GM12878 (cell line): ENCODE measurements at regions of chr6 and their contacts with region 1.

Region 1: DNA sequence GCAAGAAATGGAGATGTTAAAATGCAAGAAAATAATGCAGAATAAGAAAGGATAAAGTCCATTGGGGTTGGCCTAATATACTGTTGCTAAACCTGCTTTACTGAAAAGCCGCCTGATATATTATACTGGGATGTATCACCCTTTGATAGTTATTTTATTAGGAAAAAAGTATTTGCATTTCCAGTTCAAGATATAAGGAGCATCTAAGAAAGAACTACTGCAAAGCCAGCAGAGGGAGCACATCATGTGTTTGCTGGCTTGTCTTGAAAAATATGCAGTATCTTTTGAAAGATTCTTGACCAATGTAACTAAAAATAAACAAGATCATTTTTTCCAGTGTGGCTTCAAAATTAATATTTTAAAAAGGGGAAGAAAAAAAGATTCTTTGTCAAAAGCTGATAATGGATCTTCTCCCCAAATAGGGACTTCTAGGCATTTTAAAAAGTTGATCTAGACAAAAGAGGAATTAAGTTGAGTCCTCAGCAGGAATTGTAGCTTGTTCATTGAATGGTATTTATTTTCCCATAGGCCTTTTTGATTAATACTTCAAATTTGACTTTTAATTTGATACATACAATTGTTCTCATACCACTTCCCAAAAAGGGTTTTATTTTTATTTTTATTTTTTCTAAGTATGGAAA is 214.9 kb downstream of the ZFAND3 start:
- DNase-seq: no peak
- ATAC-seq: peak; percentile 49; the same call in 2 of the 3 replicates
- H3K4me3 ChIP-seq: no peak overlapping the region
- H3K27ac ChIP-seq: no peak overlapping the region
- H3K4me1 ChIP-seq: peaks cover 12% of the 10 kb centered on the region; the same call in 1 of the 2 replicates
- H3K27me3 ChIP-seq: no peaks in the 10 kb centered on the region
- CTCF ChIP-seq: peak; percentile 26 to 49 (median 43); a peak in 4 of 6 replicates
- EP300 ChIP-seq: no peak
- POLR2A ChIP-seq: no peak
- RAD21 ChIP-seq: peak; percentile 54

Region 2: DNA sequence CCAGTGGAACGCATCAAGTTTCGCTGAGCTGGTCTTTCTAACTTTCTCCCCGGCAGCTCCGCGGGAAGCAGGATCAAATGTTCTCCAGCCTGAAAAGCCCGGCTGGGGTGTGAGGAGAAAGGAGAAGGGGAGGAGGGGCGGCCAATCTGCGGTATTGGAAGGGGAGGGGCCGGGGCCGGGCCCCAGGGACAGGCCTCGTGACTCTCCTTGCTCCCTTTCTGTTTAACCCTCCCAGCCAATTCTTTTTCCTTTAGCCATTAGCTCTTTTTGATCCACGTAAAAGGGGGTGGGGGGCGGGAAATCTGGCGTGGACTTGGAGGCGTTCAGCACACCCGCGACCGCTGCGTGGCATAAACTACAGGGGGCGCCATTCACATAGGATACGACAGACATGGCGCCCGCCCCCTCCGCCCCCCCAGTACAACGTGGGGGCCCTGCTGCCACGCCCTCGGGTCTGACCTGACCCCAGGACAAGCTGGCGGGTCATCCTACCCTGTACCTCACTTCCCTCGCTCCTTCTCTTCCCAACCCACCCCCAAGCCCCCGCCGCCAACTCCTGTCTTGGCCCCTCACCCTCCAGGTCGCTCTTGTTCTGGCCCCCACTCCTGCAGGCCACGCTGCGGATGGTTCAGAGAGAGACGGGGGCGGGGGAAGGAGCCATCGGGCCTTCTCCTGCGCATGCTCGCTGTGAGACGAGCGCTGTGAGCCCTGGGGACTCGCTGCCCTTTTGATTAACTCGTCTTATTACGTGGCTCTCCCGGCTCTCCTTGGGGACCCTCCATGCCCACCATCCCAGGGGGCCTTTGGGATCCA is 328.9 kb before region 1 on chr6:
- CTCF ChIA-PET with region 1: interaction called, 24 read pairs
- POLR2A ChIA-PET with region 1: no interaction called
- RAD21 ChIA-PET with region 1: interaction called, 4 read pairs
- SMC1A ChIA-PET with region 1: interaction called, 8 read pairs
- in situ Hi-C with region 1: no loop called
- intact Hi-C with region 1: no loop called
- DNase-seq: peak; percentile 30
- ATAC-seq: peak; percentile 94
- H3K4me3 ChIP-seq: peak overlapping the region; percentile 38
- H3K27ac ChIP-seq: no peak overlapping the region; the same call in 1 of the 2 replicates
- H3K4me1 ChIP-seq: peaks cover 5% of the 10 kb centered on the region
- H3K27me3 ChIP-seq: peaks cover 0 to 3% of the 10 kb centered on the region in 2 experiments; a peak in 1 of 4 replicates
- CTCF ChIP-seq: peak; percentile 73 to 77 (median 75)
- EP300 ChIP-seq: no peak
- POLR2A ChIP-seq: peak; percentile 40
- RAD21 ChIP-seq: peak; percentile 64

Region 3: GRCh38 chr6:37874750-37875149 is 159.6 kb before region 1 on chr6:
- CTCF ChIA-PET with region 1: no interaction called
- POLR2A ChIA-PET with region 1: no interaction called
- RAD21 ChIA-PET with region 1: no interaction called
- SMC1A ChIA-PET with region 1: no interaction called
- in situ Hi-C with region 1: no loop called
- intact Hi-C with region 1: no loop called
- DNase-seq: no peak
- ATAC-seq: no peak
- H3K4me3 ChIP-seq: no peak overlapping the region
- H3K27ac ChIP-seq: no peak overlapping the region
- H3K4me1 ChIP-seq: no peaks in the 10 kb centered on the region; the same call in 1 of the 2 replicates
- H3K27me3 ChIP-seq: no peaks in the 10 kb centered on the region
- CTCF ChIP-seq: no peak
- EP300 ChIP-seq: no peak
- POLR2A ChIP-seq: no peak
- RAD21 ChIP-seq: no peak

Region 4: GRCh38 chr6:37965964-37966676 is 68.3 kb before region 1 on chr6:
- CTCF ChIA-PET with region 1: no interaction called
- POLR2A ChIA-PET with region 1: no interaction called
- RAD21 ChIA-PET with region 1: no interaction called
- SMC1A ChIA-PET with region 1: no interaction called
- in situ Hi-C with region 1: no loop called
- intact Hi-C with region 1: no loop called
- DNase-seq: no peak
- ATAC-seq: peak; percentile 70
- H3K4me3 ChIP-seq: no peak overlapping the region
- H3K27ac ChIP-seq: no peak overlapping the region
- H3K4me1 ChIP-seq: peaks cover 8% of the 10 kb centered on the region
- H3K27me3 ChIP-seq: no peaks in the 10 kb centered on the region
- CTCF ChIP-seq: no peak
- EP300 ChIP-seq: no peak
- POLR2A ChIP-seq: no peak
- RAD21 ChIP-seq: no peak

Region 5: DNA sequence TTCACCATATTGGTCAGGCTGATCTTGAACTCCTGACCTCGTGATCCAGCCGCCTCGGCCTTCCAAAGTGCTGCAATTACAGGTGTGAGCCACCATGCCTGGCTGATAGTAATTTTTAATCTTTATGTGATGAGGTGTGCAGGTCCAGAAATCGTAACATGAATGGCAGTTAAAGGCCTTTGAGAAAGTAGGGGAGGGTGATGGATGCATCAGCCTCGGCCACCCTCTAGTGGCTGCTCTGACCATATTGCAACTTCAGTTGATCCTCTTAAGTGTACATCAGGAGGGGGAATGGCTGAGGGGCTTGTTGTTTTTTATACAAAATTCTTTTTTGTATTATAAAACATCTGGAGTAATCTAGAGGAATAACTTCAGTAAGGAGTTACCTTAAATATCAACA is 21.8 kb before region 1 on chr6:
- CTCF ChIA-PET with region 1: interaction called, 14 read pairs
- POLR2A ChIA-PET with region 1: no interaction called
- RAD21 ChIA-PET with region 1: interaction called, 5 read pairs
- SMC1A ChIA-PET with region 1: interaction called, 7 read pairs
- in situ Hi-C with region 1: no loop called
- intact Hi-C with region 1: no loop called
- DNase-seq: no peak
- ATAC-seq: peak; percentile 94
- H3K4me3 ChIP-seq: no peak overlapping the region
- H3K27ac ChIP-seq: no peak overlapping the region
- H3K4me1 ChIP-seq: no peaks in the 10 kb centered on the region
- H3K27me3 ChIP-seq: no peaks in the 10 kb centered on the region
- CTCF ChIP-seq: peak; percentile 72 to 85 (median 76)
- EP300 ChIP-seq: no peak
- POLR2A ChIP-seq: no peak
- RAD21 ChIP-seq: peak; percentile 90

Region 6: GRCh38 chr6:38045701-38046305 is 11.4 kb after region 1 on chr6:
- CTCF ChIA-PET with region 1: interaction called, 32 read pairs
- POLR2A ChIA-PET with region 1: interaction called, 3 read pairs
- RAD21 ChIA-PET with region 1: no interaction called
- SMC1A ChIA-PET with region 1: interaction called, 6 read pairs
- in situ Hi-C with region 1: no loop called
- intact Hi-C with region 1: no loop called
- DNase-seq: no peak
- ATAC-seq: no peak
- H3K4me3 ChIP-seq: no peak overlapping the region
- H3K27ac ChIP-seq: no peak overlapping the region
- H3K4me1 ChIP-seq: no peaks in the 10 kb centered on the region
- H3K27me3 ChIP-seq: no peaks in the 10 kb centered on the region
- CTCF ChIP-seq: no peak
- EP300 ChIP-seq: no peak
- POLR2A ChIP-seq: no peak
- RAD21 ChIP-seq: no peak

Region 7: DNA sequence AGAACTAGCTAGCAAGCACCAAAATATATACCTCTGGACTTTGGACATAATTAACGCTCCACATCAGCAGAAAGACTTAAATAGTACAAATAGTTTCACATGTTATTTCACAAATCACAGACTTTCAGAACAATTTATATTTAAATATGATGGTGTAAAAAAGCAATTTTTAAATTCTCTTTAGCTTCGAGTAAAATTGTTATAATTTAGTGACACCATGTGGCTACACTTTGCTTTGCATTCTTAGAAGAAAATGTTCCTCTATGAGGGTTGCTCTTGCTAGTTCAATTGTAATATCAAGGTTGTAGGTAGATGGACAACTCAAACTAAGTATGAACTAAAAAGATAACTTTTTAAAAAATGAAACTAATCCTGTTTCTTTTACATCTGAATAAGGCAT is 536.4 kb after region 1 on chr6:
- CTCF ChIA-PET with region 1: interaction called, 21 read pairs
- POLR2A ChIA-PET with region 1: no interaction called
- RAD21 ChIA-PET with region 1: interaction called, 13 read pairs
- SMC1A ChIA-PET with region 1: interaction called, 20 read pairs
- in situ Hi-C with region 1: no loop called
- intact Hi-C with region 1: loop called (anchors 5 kb)
- DNase-seq: no peak
- ATAC-seq: peak; percentile 61
- H3K4me3 ChIP-seq: no peak overlapping the region
- H3K27ac ChIP-seq: no peak overlapping the region
- H3K4me1 ChIP-seq: no peaks in the 10 kb centered on the region
- H3K27me3 ChIP-seq: no peaks in the 10 kb centered on the region
- CTCF ChIP-seq: peak; percentile 12 to 53 (median 46); a peak in 2 of 6 replicates
- EP300 ChIP-seq: no peak
- POLR2A ChIP-seq: no peak
- RAD21 ChIP-seq: peak; percentile 63

Region 8: DNA sequence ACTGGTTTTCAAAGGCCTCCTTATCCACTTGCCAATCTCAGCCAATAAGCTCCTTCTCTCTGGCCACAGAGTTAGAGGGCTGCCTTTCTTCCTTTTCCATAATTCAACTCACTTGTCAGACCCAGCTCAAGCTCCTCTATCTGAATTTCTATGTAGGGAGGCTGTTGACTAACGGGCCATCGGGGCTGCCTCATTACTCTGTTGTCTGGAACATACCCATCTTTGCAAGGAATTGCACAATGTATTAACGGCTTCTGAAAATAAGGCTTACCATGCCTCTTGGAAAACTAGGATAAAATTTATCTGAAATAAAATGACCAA is 1719.3 kb after region 1 on chr6:
- CTCF ChIA-PET with region 1: no interaction called
- POLR2A ChIA-PET with region 1: no interaction called
- RAD21 ChIA-PET with region 1: no interaction called
- SMC1A ChIA-PET with region 1: no interaction called
- in situ Hi-C with region 1: no loop called
- intact Hi-C with region 1: no loop called
- DNase-seq: no peak
- ATAC-seq: no peak; the same call in 2 of the 3 replicates
- H3K4me3 ChIP-seq: no peak overlapping the region
- H3K27ac ChIP-seq: no peak overlapping the region
- H3K4me1 ChIP-seq: no peaks in the 10 kb centered on the region
- H3K27me3 ChIP-seq: no peaks in the 10 kb centered on the region
- CTCF ChIP-seq: no peak
- EP300 ChIP-seq: no peak
- POLR2A ChIP-seq: no peak
- RAD21 ChIP-seq: no peak